Activated naive CD4-positive, alpha-beta T cell treated with anti-CD3 and anti-CD28 coated beads for 36 hours (primary cell): ENCODE measurements at regions of chr12 and their contacts with region 1.

Region 1: DNA sequence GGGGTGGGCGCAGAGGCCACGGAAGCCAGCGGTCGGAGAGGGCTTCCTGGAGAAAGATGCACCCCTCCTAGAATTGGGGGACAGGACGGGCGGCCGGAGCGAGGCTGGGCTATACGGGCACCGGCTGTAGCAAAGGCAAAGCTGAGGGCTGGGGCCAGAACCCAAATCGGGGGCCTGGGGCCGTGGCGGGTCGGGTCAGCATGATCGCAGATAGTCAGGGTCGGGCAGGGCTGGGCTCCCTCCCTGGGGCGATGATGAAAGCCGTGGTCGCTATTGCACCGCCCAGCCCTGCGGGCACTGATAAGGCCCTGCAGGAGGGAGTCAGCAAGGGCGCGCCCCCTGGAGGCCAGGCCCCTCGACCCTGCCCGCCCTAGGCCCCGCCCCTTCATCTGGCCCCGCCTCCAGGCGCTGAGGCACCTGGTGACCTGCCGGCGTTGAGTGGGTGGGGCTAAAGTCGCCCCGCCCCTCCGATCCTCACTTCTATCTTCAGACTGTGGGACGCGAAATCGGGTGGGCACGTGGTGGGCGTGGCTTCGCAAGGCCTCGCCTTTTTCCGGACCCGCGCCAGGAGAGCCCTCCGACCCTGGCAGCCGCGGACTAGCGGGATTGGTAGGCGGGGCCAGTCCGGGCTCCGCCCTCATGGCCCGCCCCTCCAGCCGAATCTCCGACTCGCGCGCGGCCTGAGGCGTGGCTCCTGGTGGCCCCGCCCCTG is 418 bp upstream of the SH2B3 start:
- DNase-seq: peak; percentile 99
- H3K4me3 Mint-ChIP-seq: peak overlapping the region; percentile 77
- H3K27ac Mint-ChIP-seq: peak overlapping the region; percentile 96
- H3K4me1 Mint-ChIP-seq: peaks cover 57% of the 10 kb centered on the region
- H3K27me3 Mint-ChIP-seq: no peaks in the 10 kb centered on the region

Region 2: DNA sequence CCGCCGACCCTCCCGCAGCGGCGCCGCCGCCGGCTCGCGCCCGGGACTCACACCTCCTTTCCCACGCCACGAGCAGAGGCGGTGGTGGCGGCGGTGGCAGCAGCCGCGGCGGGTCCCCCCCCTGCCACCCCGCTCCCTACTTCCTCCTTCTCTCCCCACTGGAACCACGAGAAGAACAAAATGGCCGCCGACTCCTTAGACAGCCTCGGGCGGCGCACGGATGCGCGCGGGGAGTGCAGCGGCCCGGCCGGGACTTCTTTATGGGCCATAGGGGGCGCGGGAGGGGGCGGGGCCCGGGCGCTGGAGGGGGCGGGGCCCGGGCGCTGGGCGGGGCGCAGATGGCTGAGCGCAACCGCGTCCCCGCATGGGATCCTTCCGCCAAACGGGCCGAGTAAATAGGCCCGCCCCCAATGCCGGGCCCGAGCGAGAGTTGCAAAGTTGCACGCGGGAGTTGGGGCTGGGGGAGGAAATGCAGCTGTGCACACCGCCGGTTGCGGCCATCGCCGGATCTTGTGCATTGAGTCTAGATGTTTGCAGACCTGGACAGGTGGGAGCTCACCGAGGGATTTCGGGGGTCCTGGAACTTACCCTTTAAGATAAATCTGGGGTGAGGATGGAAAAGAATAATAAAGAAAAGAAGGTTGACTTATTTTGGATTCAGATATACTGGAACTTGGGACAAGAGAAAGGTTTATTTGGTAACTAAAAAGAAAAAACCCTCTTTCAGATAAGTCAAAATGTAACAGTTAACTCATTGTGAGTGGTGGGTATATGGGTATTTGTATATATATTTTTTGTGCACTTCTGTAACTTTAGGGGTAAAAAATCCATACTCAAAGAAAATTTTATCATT is 662.4 kb before region 1 on chr12 and contains the start of gene PPP1CC:
- CTCF ChIA-PET with region 1: no interaction called
- intact Hi-C with region 1: loop called (anchors 10 kb)
- DNase-seq: peak; percentile 93
- H3K4me3 Mint-ChIP-seq: peak within 1 kb of the TSS; percentile 99
- H3K27ac Mint-ChIP-seq: peak within 1 kb of the TSS; percentile 98
- H3K4me1 Mint-ChIP-seq: peaks cover 37% of the 10 kb centered on the region
- H3K27me3 Mint-ChIP-seq: no peaks in the 10 kb centered on the region
- total RNA-seq, gene PPP1CC: 280 to 285 TPM

Region 3: DNA sequence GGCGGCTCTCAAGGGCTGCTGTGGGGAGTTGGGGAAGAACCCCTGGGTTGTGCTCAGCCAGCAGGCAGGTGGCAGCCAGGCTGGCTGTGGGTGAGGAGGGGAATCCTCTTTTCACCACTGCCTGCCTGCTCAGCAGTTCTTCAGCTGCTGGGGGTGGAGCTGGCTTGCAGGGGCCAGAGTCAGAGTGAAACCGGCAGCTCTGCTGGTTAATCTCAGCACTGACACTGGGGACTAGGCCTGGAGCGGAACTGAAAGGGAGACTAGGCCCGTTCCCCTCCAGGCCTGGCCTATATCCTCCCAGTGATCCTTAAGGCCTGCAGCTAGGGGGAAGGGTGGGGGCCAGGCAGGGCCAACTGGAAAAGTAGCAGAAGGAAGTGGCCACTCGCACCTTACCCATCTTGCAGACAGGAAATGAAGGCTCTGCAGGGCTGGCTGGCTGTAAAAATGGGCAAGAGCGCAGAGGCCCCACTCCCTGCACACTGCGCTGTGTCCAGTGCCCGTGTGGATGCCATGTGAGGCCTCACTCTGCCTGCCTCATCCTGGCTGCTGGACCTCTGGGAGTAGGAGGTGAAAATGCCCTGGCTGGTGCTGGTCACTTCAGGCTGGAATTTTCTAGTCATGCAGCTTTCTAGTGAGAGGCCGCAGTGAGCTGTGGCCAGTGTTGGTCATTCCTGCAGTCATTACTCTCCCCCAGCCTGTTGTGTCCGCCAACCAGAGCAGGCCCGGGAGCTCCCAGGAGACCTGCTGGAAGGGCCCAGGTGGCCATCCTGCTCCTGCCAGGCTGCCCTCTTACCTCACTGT is 39.8 kb after region 1 on chr12:
- CTCF ChIA-PET with region 1: interaction called, 763 read pairs
- intact Hi-C with region 1: loop called (anchors 1 kb)
- DNase-seq: peak; percentile 97
- H3K4me3 Mint-ChIP-seq: no peak overlapping the region
- H3K27ac Mint-ChIP-seq: peak overlapping the region; percentile 67
- H3K4me1 Mint-ChIP-seq: peaks cover 67% of the 10 kb centered on the region
- H3K27me3 Mint-ChIP-seq: no peaks in the 10 kb centered on the region

Region 4: DNA sequence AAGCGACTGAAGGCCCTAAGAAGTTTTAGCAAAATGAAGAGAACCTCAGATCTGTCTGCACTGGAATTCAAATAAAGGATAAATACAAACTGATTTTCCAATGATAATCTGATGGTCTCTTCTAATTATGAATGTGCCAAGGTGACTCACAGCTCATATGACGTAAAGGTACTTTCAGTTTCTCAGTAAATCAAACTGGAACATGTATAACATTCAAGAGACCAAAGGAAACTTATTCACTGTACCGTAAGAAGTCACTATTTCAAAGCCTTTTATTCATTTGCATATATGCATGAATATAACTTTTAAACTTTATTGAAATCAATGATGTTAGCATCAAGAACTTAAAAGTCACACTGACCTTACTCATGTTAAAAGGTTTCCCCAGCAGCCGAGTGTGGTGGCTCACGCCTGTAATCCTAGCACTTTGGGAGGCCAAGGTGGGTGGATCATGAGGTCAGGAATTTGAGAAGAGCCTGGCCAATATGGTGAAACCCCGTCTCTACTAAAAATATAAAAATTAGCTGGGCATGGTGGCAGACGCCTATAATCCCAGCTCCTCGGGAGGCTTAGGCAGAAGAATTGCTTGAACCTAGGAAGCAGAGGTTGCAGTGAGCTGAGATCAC is 141.6 kb after region 1 on chr12:
- CTCF ChIA-PET with region 1: no interaction called
- intact Hi-C with region 1: loop called (anchors 5 kb)
- DNase-seq: peak; percentile 54
- H3K4me3 Mint-ChIP-seq: no peak overlapping the region
- H3K27ac Mint-ChIP-seq: peak overlapping the region; percentile 51
- H3K4me1 Mint-ChIP-seq: peaks cover 20% of the 10 kb centered on the region
- H3K27me3 Mint-ChIP-seq: no peaks in the 10 kb centered on the region

Region 5: DNA sequence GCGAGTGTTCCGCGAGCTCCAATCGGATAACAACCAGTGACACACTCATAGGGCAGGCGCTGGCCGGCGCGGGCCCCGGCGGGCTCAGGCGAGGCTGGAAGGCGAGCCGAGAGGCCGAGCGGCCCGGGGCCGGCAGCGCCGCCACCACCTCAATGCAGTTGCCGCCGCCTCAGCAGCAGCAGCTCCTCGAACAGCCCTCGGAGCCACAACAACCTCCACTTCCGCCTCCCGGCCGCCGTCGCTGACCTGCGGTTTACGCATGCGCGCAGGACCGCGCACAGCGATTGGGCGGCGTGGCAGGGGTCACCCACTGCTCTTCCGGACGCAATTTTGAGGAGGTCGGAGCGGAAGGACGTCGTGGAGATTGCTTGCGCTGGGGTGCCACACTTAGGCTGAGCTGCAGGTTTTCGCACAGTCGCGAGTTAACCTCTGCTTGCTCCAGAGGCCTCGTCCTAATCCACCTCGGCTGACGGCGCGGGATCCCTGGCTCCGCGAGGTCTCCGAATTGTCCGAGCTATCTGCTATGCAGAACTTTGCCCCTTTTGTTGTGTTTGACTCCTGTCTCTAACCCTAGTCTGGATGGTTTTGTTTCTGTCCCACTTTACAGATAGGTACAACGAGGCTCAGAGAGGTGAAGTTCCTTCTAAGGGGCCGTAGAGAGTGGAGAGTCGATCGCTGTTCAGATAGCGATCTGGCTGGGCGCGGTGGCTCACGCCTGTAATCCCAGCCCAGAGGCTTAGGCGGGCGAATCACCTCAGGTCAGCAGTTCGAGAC is 280.6 kb after region 1 on chr12 and contains the starts of genes ACAD10 and BRAP:
- CTCF ChIA-PET with region 1: interaction called, 4 read pairs
- intact Hi-C with region 1: loop called (anchors 2 kb)
- DNase-seq: peak; percentile 94
- H3K4me3 Mint-ChIP-seq: peak within 1 kb of the TSS; percentile 91
- H3K27ac Mint-ChIP-seq: peak within 1 kb of the TSS; percentile 86
- H3K4me1 Mint-ChIP-seq: peaks cover 33% of the 10 kb centered on the region
- H3K27me3 Mint-ChIP-seq: no peaks in the 10 kb centered on the region
- total RNA-seq, gene ACAD10: 19.0 to 21.7 TPM
- total RNA-seq, gene BRAP: 14.7 to 16.9 TPM